ENCODE measurements at regions of chr2 and their contacts with region 1.

Region 1: GRCh38 chr2:130797493-130798435 is 39.0 kb upstream of the ARHGEF4 start:
- DNase-seq: peak; percentile 97
- ATAC-seq: peak; percentile 89
- H3K4me3 Mint-ChIP-seq: peak overlapping the region; percentile 67
- H3K27ac Mint-ChIP-seq: peak overlapping the region; percentile 52
- H3K4me1 Mint-ChIP-seq: peaks cover 7% of the 10 kb centered on the region
- H3K27me3 Mint-ChIP-seq: peaks cover 19% of the 10 kb centered on the region

Region 2: GRCh38 chr2:130776550-130776949 is 21.2 kb before region 1 on chr2:
- POLR2A ChIA-PET with region 1: no interaction called
- DNase-seq: no peak
- ATAC-seq: no peak
- H3K4me3 Mint-ChIP-seq: no peak overlapping the region
- H3K27ac Mint-ChIP-seq: no peak overlapping the region
- H3K4me1 Mint-ChIP-seq: no peaks in the 10 kb centered on the region
- H3K27me3 Mint-ChIP-seq: peaks cover 27% of the 10 kb centered on the region

Region 3: GRCh38 chr2:130824492-130825061 is 26.8 kb after region 1 on chr2:
- POLR2A ChIA-PET with region 1: no interaction called
- DNase-seq: no peak
- ATAC-seq: peak; percentile 97
- H3K4me3 Mint-ChIP-seq: peak overlapping the region; percentile 11
- H3K27ac Mint-ChIP-seq: peak overlapping the region; percentile 74
- H3K4me1 Mint-ChIP-seq: peaks cover 14% of the 10 kb centered on the region
- H3K27me3 Mint-ChIP-seq: peaks cover 12% of the 10 kb centered on the region

Region 4: GRCh38 chr2:130873700-130874346 is 76.1 kb after region 1 on chr2:
- POLR2A ChIA-PET with region 1: interaction called, 15 read pairs
- DNase-seq: peak; percentile 69
- ATAC-seq: peak; percentile 62
- H3K4me3 Mint-ChIP-seq: no peak overlapping the region
- H3K27ac Mint-ChIP-seq: no peak overlapping the region
- H3K4me1 Mint-ChIP-seq: no peaks in the 10 kb centered on the region
- H3K27me3 Mint-ChIP-seq: peaks cover 15% of the 10 kb centered on the region

Region 5: GRCh38 chr2:130899306-130899705 is 101.5 kb after region 1 on chr2:
- POLR2A ChIA-PET with region 1: no interaction called
- DNase-seq: no peak
- ATAC-seq: no peak
- H3K4me3 Mint-ChIP-seq: no peak overlapping the region
- H3K27ac Mint-ChIP-seq: no peak overlapping the region
- H3K4me1 Mint-ChIP-seq: no peaks in the 10 kb centered on the region
- H3K27me3 Mint-ChIP-seq: peaks cover 5% of the 10 kb centered on the region

Measured in activated naive CD8-positive, alpha-beta T cell treated with anti-CD3 and anti-CD28 coated beads, Interleukin-2, amount 10 ng/mL, durations not matched to agents 7 days and 5 days (primary cell).